Caco-2 (cell line): ENCODE measurements at regions of chr11 and their contacts with region 1.

Region 1: DNA sequence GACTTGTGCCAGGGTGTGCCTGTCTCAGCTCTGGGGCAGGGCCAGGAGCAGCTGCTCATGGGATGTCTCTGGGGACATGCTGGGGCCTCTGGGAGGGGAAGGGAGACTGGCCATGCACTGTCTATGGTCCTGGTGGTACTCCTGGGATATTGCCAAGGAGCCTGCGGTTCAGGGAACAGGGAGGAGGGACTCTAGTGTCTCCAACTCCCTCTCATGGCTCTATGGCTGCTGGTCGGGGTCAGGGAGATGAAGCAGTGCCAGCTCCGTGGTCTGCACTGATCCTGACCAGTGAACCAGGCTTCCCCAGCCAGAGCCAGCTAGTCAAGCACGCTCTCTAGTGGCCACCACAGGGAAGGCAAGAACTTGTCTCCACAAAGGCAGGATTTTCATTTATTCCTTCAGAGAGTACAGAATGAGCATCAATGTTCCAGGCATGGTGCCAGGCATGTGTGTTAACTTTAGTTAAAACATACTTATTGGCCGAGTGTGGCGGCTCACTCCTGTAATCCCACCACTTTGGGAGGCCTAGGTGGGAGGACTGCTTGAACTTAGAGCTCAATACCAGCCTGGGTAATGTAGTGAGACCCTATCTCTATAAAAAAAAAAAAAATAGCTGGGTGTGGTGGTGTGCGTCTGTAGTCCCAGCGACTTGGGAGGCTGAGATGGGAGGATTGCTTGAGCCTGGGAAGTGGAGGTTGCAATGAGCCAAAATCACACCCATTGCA is 2.5 kb upstream of the BEST1 start:
- DNase-seq: peak; percentile 81 to 88
- H3K4me3 ChIP-seq: no peak overlapping the region
- H3K4me3 Mint-ChIP-seq: no peak overlapping the region
- H3K27ac Mint-ChIP-seq: no peak overlapping the region
- H3K4me1 ChIP-seq: peaks cover 12% of the 10 kb centered on the region
- H3K4me1 Mint-ChIP-seq: no peaks in the 10 kb centered on the region
- H3K27me3 ChIP-seq: no peaks in the 10 kb centered on the region
- H3K27me3 Mint-ChIP-seq: no peaks in the 10 kb centered on the region
- CTCF ChIP-seq: peak; percentile 88 to 98

Region 2: GRCh38 chr11:61792310-61793085 is 155.2 kb before region 1 on chr11 and contains the starts of genes FEN1 and TMEM258:
- CTCF ChIA-PET with region 1: interaction called, 15 read pairs
- POLR2A ChIA-PET with region 1: interaction called, 3 read pairs
- intact Hi-C with region 1: loop called (anchors 1 kb)
- DNase-seq: peak; percentile 90 to 91
- H3K4me3 ChIP-seq: peak within 1 kb of the TSS; percentile 54
- H3K4me3 Mint-ChIP-seq: peak within 1 kb of the TSS; percentile 96
- H3K27ac Mint-ChIP-seq: peak within 1 kb of the TSS; percentile 100
- H3K4me1 ChIP-seq: peaks cover 5% of the 10 kb centered on the region; the same call in 1 of the 2 replicates
- H3K4me1 Mint-ChIP-seq: peaks cover 21% of the 10 kb centered on the region
- H3K27me3 ChIP-seq: no peaks in the 10 kb centered on the region
- H3K27me3 Mint-ChIP-seq: no peaks in the 10 kb centered on the region
- CTCF ChIP-seq: no peak
- total RNA-seq, gene FEN1: 83.4 and 86.1 TPM in 2 replicates
- total RNA-seq, gene TMEM258: 190 and 197 TPM in 2 replicates

Region 3: GRCh38 chr11:61885166-61885778 is 62.4 kb before region 1 on chr11:
- CTCF ChIA-PET with region 1: interaction called, 11 read pairs
- POLR2A ChIA-PET with region 1: interaction called, 3 read pairs
- intact Hi-C with region 1: no loop called
- DNase-seq: no peak
- H3K4me3 ChIP-seq: no peak overlapping the region
- H3K4me3 Mint-ChIP-seq: no peak overlapping the region
- H3K27ac Mint-ChIP-seq: no peak overlapping the region
- H3K4me1 ChIP-seq: peaks cover 8% of the 10 kb centered on the region
- H3K4me1 Mint-ChIP-seq: peaks cover 13% of the 10 kb centered on the region
- H3K27me3 ChIP-seq: no peaks in the 10 kb centered on the region
- H3K27me3 Mint-ChIP-seq: no peaks in the 10 kb centered on the region
- CTCF ChIP-seq: no peak

Region 4: DNA sequence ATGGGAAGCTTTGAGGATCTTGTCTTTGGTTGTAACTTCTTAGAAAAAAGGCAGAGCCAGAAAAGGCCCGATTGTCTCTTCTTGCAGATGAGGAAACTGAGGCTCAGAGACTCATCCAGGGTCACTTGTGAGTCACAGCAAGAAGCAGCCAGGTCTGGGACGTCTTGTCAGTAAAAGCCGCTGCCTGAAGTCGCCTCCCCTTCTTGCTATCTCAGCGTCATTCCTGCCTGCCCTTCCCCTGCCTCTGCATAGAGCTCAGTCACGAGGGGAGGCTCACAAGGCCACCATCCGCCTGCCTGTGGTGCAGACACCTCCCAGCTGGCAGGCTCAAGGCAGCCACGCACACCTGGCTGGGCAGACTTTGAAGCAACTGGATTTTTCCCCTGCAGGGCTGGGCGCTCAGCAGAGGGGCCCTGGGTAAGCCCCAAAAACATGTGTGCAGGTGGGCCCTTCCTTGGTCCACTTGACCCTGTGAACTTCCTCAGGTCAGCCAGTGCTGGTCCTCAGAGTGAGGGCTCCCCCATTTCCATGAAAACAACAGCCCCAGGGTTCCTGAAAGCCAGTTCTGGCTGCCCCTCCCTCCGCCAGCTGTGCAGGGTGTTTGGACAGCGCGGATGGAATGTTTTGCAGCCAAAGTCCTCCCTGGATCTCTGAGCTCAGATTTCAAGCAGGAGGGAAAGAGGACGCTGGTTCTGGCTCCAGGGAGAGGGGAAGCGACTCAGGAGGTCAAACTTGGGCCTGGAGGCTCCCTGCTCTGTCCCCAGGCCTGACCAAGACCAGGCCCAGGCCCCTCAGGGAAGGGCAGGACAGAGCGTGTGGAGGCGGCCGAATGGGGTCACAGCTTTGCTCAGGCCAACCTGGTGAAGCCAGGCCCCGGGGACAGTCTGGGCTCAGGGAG is 24.2 kb before region 1 on chr11:
- CTCF ChIA-PET with region 1: interaction called, 50 read pairs
- POLR2A ChIA-PET with region 1: interaction called, 11 read pairs
- intact Hi-C with region 1: loop called (anchors 1 kb)
- DNase-seq: peak; percentile 89 to 92
- H3K4me3 ChIP-seq: no peak overlapping the region
- H3K4me3 Mint-ChIP-seq: peak overlapping the region; percentile 68
- H3K27ac Mint-ChIP-seq: peak overlapping the region; percentile 98
- H3K4me1 ChIP-seq: peaks cover 48% of the 10 kb centered on the region
- H3K4me1 Mint-ChIP-seq: peaks cover 49% of the 10 kb centered on the region
- H3K27me3 ChIP-seq: no peaks in the 10 kb centered on the region
- H3K27me3 Mint-ChIP-seq: no peaks in the 10 kb centered on the region
- CTCF ChIP-seq: no peak

Region 5: GRCh38 chr11:61985885-61986345 is 38.3 kb after region 1 on chr11:
- CTCF ChIA-PET with region 1: interaction called, 5 read pairs
- POLR2A ChIA-PET with region 1: interaction called, 11 read pairs
- intact Hi-C with region 1: no loop called
- DNase-seq: peak; percentile 84 to 87
- H3K4me3 ChIP-seq: no peak overlapping the region
- H3K4me3 Mint-ChIP-seq: peak overlapping the region; percentile 52
- H3K27ac Mint-ChIP-seq: peak overlapping the region; percentile 85
- H3K4me1 ChIP-seq: peaks cover 21% of the 10 kb centered on the region
- H3K4me1 Mint-ChIP-seq: peaks cover 14% of the 10 kb centered on the region
- H3K27me3 ChIP-seq: no peaks in the 10 kb centered on the region
- H3K27me3 Mint-ChIP-seq: no peaks in the 10 kb centered on the region
- CTCF ChIP-seq: no peak

Region 6: GRCh38 chr11:62108017-62108750 is 160.5 kb after region 1 on chr11:
- CTCF ChIA-PET with region 1: interaction called, 8 read pairs
- POLR2A ChIA-PET with region 1: no interaction called
- intact Hi-C with region 1: loop called (anchors 2 kb)
- DNase-seq: peak in 1 of 2 experiments; percentile 64
- H3K4me3 ChIP-seq: no peak overlapping the region
- H3K4me3 Mint-ChIP-seq: no peak overlapping the region
- H3K27ac Mint-ChIP-seq: no peak overlapping the region
- H3K4me1 ChIP-seq: peaks cover 3% of the 10 kb centered on the region; the same call in 1 of the 2 replicates
- H3K4me1 Mint-ChIP-seq: no peaks in the 10 kb centered on the region
- H3K27me3 ChIP-seq: no peaks in the 10 kb centered on the region
- H3K27me3 Mint-ChIP-seq: no peaks in the 10 kb centered on the region
- CTCF ChIP-seq: peak; percentile 75 to 76